Ovary (tissue), 10 donors: ENCODE measurements at regions of chr9 and their contacts with region 1.

Region 1: DNA sequence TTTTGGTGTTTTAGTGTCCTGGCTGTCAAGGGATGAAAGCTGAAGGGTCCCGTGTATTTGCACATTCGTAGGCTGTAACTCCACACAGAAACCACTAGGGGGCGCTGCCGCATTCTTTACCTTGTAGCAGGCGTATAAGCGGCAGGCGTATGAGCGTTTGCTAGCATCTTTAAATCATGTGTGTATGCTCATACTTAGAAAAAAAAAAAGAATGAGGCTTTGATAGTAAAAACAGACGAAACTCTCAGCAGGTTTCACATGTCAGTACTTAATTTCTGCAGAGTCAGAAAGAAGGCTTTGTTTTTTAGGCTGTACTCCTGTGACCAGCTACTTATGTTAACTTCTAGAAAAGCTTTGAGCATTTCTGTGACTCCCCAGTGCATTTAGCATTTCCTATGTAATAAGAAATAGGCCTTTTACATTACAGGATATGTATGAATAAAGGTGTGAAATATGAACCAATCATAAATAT is 218.8 kb upstream of the ADAMTSL1 start:
- DNase-seq: peak; percentile 70 to 85 (median 82)
- H3K4me3 ChIP-seq: no peak overlapping the region
- H3K27ac ChIP-seq: no peak overlapping the region
- H3K4me1 ChIP-seq: no peaks in the 10 kb centered on the region
- H3K27me3 ChIP-seq: no peaks in the 10 kb centered on the region
- CTCF ChIP-seq: peak; percentile 73 to 85 (median 80)
- EP300 ChIP-seq: no peak
- POLR2A ChIP-seq: no peak

Region 2: DNA sequence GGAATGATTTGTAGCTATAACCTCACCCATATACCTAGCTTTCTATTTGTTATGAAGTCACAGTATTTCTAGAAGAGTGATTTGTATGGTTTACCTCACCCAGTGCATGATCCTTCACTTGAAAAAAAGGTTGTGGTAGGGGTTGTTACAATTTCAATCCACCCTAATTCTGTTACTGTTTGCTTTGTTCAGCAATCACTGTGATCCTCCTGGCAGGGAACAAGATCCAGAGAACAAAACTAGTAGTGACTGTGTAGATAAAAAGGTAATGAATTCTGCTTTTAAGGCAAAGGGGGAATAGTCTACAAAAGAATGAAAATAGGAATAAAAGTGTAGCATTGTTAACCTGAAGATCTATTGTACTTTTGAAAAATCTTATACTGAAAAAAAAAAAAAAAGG is 867.6 kb before region 1 on chr9:
- intact Hi-C with region 1: no loop called
- DNase-seq: no peak
- H3K4me3 ChIP-seq: no peak overlapping the region
- H3K27ac ChIP-seq: no peak overlapping the region
- H3K4me1 ChIP-seq: no peaks in the 10 kb centered on the region
- H3K27me3 ChIP-seq: no peaks in the 10 kb centered on the region
- CTCF ChIP-seq: no peak
- EP300 ChIP-seq: no peak
- POLR2A ChIP-seq: no peak

Region 3: DNA sequence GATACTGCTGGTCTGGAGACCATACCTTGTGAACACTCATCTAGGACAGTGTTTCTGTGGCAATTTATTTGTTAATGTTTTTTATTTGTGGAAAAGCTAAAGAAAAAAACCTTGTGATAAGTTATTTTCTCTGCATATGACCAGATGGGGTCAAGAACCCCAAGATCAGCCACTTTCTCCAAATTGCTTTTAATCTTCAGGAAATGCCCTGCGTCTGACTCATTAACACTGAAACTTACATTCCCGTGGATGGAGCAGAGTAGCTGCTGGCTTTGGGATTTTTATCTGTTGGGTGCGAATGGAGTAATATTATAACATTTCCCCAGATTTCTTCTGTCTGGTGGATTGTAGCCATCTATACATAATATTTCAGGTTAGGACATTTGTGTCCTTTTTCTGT is 231.9 kb before region 1 on chr9:
- intact Hi-C with region 1: no loop called
- DNase-seq: no peak
- H3K4me3 ChIP-seq: no peak overlapping the region
- H3K27ac ChIP-seq: no peak overlapping the region
- H3K4me1 ChIP-seq: no peaks in the 10 kb centered on the region
- H3K27me3 ChIP-seq: no peaks in the 10 kb centered on the region
- CTCF ChIP-seq: no peak
- EP300 ChIP-seq: no peak
- POLR2A ChIP-seq: no peak

Region 4: DNA sequence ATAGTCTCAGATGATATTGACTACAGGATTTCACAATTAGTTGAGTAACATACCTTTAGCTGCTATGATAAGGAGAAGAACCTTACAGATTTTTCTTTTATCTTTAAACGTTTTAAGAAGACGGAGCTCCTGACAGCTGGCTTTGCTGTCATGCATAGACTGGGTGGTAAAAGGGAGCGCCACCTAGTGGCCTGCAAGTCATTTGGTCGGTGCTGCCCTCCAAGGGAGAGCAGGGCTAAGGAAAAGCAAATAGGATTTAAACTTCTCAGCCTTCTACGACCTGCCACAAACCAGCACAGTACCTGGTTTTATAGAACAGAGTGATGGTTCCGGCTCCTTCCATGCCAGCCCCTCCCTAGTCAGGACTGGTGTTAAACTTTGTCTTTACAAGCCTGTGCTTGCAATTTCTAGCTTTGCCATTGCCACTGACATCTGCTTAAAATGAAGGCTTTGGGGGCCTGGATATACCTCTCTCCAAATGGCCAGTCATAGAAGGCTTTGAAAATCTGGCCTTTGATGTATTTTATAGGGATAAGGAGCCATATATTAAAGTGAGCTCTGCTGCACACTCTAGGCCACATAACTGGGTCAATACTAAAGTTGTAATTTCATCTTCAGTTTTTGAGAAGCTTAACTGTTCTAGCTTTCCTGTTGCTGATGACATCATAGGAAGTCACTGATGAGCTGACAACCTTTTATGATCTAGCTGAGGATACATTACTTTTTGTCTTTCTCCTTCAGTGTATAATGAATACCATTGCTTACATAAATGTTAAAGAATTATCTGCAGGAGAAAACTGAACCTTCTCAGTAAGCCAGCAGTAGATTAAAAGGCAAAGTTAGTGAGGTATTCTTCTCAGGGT is 187.7 kb after region 1 on chr9:
- intact Hi-C with region 1: loop called in 2 of 4 experiments (anchors 5 to 10 kb)
- DNase-seq: peak; percentile 63 to 80 (median 76)
- H3K4me3 ChIP-seq: no peak overlapping the region
- H3K27ac ChIP-seq: no peak overlapping the region
- H3K4me1 ChIP-seq: peaks cover 5% of the 10 kb centered on the region
- H3K27me3 ChIP-seq: no peaks in the 10 kb centered on the region
- CTCF ChIP-seq: peak; percentile 69 to 86 (median 79)
- EP300 ChIP-seq: no peak
- POLR2A ChIP-seq: no peak

Region 5: GRCh38 chr9:18610956-18611355 is 355.8 kb after region 1 on chr9:
- intact Hi-C with region 1: loop called in 1 of 4 experiments (anchors 10 kb)
- DNase-seq: no peak
- H3K4me3 ChIP-seq: no peak overlapping the region
- H3K27ac ChIP-seq: no peak overlapping the region
- H3K4me1 ChIP-seq: peaks cover 7% of the 10 kb centered on the region
- H3K27me3 ChIP-seq: no peaks in the 10 kb centered on the region
- CTCF ChIP-seq: no peak
- EP300 ChIP-seq: no peak
- POLR2A ChIP-seq: no peak

Region 6: DNA sequence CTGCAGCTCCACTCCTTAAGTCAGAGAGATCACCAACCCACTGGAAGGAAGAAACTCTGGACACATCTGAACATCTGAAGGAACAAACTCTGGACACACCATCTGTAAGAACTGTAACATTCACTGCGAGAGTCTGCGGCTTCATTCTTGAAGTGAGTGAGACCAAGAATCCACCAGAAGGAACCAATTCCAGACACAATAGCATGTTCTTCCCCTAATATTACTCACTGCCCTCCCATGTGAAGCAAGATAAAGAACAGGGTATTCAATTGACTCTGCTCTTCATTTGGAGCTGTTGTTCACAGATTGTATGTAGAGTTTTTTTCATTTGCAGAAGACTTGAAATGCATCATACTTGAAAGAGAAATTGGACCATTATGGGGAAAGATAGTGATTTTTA is 767.0 kb after region 1 on chr9:
- intact Hi-C with region 1: loop called in 2 of 4 experiments (anchors 5 to 10 kb)
- DNase-seq: no peak
- H3K4me3 ChIP-seq: no peak overlapping the region
- H3K27ac ChIP-seq: no peak overlapping the region
- H3K4me1 ChIP-seq: no peaks in the 10 kb centered on the region
- H3K27me3 ChIP-seq: no peaks in the 10 kb centered on the region
- CTCF ChIP-seq: no peak
- EP300 ChIP-seq: no peak
- POLR2A ChIP-seq: no peak

Region 7: DNA sequence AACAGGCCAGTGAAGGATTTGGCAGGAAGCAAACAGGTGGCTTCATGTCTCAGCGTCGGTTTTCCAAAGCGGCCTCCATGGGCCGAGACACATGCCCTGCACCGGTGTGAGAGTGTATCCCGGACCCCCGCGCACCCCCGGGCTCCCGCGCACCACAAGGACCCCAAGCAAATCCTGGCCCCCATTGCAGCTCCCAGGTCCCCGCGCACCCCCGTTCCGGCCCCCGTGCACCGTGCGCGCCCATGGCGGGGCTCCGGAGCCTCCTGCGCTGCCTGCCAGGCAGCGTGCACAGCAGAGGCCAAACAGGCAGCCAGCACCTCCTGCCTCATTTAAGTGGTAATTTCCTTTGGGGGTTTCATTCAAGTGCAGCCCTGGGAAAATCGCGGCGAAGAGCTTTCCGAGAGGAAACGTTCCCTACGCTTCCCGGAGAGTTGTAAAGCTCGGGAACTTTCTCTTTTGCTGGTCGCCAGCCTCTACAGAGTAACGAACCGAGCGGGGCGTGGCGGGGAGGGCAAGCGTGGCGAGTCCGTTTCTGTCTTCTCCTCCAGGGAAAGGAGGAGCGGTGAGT is 1679.2 kb after region 1 on chr9:
- intact Hi-C with region 1: no loop called
- DNase-seq: peak in 3 of 5 donors; percentile 19 to 43 (median 35)
- H3K4me3 ChIP-seq: peak overlapping the region; percentile 39
- H3K27ac ChIP-seq: no peak overlapping the region
- H3K4me1 ChIP-seq: peaks cover 3% of the 10 kb centered on the region
- H3K27me3 ChIP-seq: no peaks in the 10 kb centered on the region
- CTCF ChIP-seq: no peak
- EP300 ChIP-seq: no peak
- POLR2A ChIP-seq: no peak